Activated T-helper 1 cell treated with anti-CD3 and anti-CD28 coated beads, Interleukin-12 subunit alpha, Interleukin-12 subunit beta, Interleukin-2, Interleukin-4 antibody, amounts not matched to agents 30 ng/mL and 10 ng/mL and 1 ng/mL, durations not matched to agents 14 hours and 24 hours and 36 hours (primary cell): ENCODE measurements at regions of chr10 and their contacts with region 1.

Region 1: DNA sequence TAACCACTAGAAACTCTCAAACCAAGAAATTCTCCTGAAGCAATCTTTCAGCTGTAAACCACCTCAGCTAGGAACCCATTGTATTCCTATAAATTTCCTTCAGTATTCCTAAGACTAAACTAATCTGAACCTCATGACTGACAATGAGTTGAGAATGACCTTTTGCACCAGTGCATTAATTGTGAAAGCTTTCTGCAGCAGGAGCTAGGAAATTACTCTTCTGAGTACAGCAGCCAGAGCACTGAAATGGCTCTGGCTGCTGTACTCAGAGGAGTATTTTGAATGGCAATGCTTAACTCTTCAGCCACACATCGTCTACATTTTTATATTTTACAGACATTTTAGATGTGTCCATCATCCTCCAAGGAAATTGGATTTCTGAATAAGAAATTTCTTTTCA is 109.7 kb downstream of the PCDH15 start:
- DNase-seq: no peak
- H3K4me3 Mint-ChIP-seq: no peak overlapping the region
- H3K27ac Mint-ChIP-seq: no peak overlapping the region
- H3K4me1 Mint-ChIP-seq: no peaks in the 10 kb centered on the region
- H3K27me3 Mint-ChIP-seq: no peaks in the 10 kb centered on the region

Region 2: GRCh38 chr10:54710918-54711317 is 19.6 kb after region 1 on chr10:
- intact Hi-C with region 1: loop called (anchors 1 kb)
- DNase-seq: no peak
- H3K4me3 Mint-ChIP-seq: no peak overlapping the region
- H3K27ac Mint-ChIP-seq: no peak overlapping the region
- H3K4me1 Mint-ChIP-seq: no peaks in the 10 kb centered on the region
- H3K27me3 Mint-ChIP-seq: no peaks in the 10 kb centered on the region